ENCODE measurements at regions of chr2 and their contacts with region 1.

Region 1: GRCh38 chr2:68031542-68032160 is 31.2 kb downstream of the C1D start:
- DNase-seq: peak; percentile 70
- ATAC-seq: peak; percentile 89
- H3K4me3 ChIP-seq: no peak overlapping the region
- H3K27ac ChIP-seq: no peak overlapping the region
- H3K4me1 ChIP-seq: no peaks in the 10 kb centered on the region; the same call in 1 of the 2 replicates
- H3K27me3 ChIP-seq: no peaks in the 10 kb centered on the region
- CTCF ChIP-seq: peak; percentile 79
- POLR2A ChIP-seq: no peak
- RAD21 ChIP-seq: peak; percentile 89

Region 2: GRCh38 chr2:66429071-66429477 is 1602.6 kb before region 1 on chr2:
- CTCF ChIA-PET with region 1: no interaction called
- POLR2A ChIA-PET with region 1: no interaction called
- dilution Hi-C with region 1: no loop called
- in situ Hi-C with region 1: loop called (anchors 25 kb)
- intact Hi-C with region 1: loop called (anchors 5 kb)
- DNase-seq: peak; percentile 79
- ATAC-seq: peak; percentile 19; the same call in 1 of the 2 replicates
- H3K4me3 ChIP-seq: no peak overlapping the region
- H3K27ac ChIP-seq: no peak overlapping the region
- H3K4me1 ChIP-seq: peaks cover 5% of the 10 kb centered on the region; the same call in 1 of the 2 replicates
- H3K27me3 ChIP-seq: peaks cover 6% of the 10 kb centered on the region; the same call in 1 of the 2 replicates
- CTCF ChIP-seq: peak; percentile 86
- POLR2A ChIP-seq: 0 out of 2 replicates have a peak, but pooled peaks have one; percentile 24
- RAD21 ChIP-seq: peak; percentile 88

Region 3: GRCh38 chr2:67234439-67234838 is 797.2 kb before region 1 on chr2:
- CTCF ChIA-PET with region 1: no interaction called
- POLR2A ChIA-PET with region 1: no interaction called
- dilution Hi-C with region 1: no loop called
- in situ Hi-C with region 1: loop called (anchors 10 kb)
- intact Hi-C with region 1: no loop called
- DNase-seq: peak; percentile 72
- ATAC-seq: peak; percentile 94
- H3K4me3 ChIP-seq: no peak overlapping the region
- H3K27ac ChIP-seq: no peak overlapping the region
- H3K4me1 ChIP-seq: peaks cover 2% of the 10 kb centered on the region; the same call in 1 of the 2 replicates
- H3K27me3 ChIP-seq: no peaks in the 10 kb centered on the region
- CTCF ChIP-seq: peak; percentile 75
- POLR2A ChIP-seq: no peak
- RAD21 ChIP-seq: peak; percentile 86

Region 4: GRCh38 chr2:67733517-67733916 is 298.1 kb before region 1 on chr2:
- CTCF ChIA-PET with region 1: no interaction called
- POLR2A ChIA-PET with region 1: no interaction called
- dilution Hi-C with region 1: no loop called
- in situ Hi-C with region 1: no loop called
- intact Hi-C with region 1: loop called (anchors 5 kb)
- DNase-seq: no peak
- ATAC-seq: peak; percentile 57
- H3K4me3 ChIP-seq: no peak overlapping the region
- H3K27ac ChIP-seq: no peak overlapping the region
- H3K4me1 ChIP-seq: no peaks in the 10 kb centered on the region
- H3K27me3 ChIP-seq: no peaks in the 10 kb centered on the region
- CTCF ChIP-seq: peak; percentile 33; the same call in 1 of the 2 replicates
- POLR2A ChIP-seq: no peak
- RAD21 ChIP-seq: peak; percentile 40

Region 5: GRCh38 chr2:67760995-67761394 is 270.7 kb before region 1 on chr2:
- CTCF ChIA-PET with region 1: no interaction called
- POLR2A ChIA-PET with region 1: no interaction called
- dilution Hi-C with region 1: no loop called
- in situ Hi-C with region 1: no loop called
- intact Hi-C with region 1: no loop called
- DNase-seq: no peak
- ATAC-seq: no peak
- H3K4me3 ChIP-seq: no peak overlapping the region
- H3K27ac ChIP-seq: no peak overlapping the region
- H3K4me1 ChIP-seq: no peaks in the 10 kb centered on the region
- H3K27me3 ChIP-seq: no peaks in the 10 kb centered on the region
- CTCF ChIP-seq: no peak
- POLR2A ChIP-seq: no peak
- RAD21 ChIP-seq: no peak

Region 6: DNA sequence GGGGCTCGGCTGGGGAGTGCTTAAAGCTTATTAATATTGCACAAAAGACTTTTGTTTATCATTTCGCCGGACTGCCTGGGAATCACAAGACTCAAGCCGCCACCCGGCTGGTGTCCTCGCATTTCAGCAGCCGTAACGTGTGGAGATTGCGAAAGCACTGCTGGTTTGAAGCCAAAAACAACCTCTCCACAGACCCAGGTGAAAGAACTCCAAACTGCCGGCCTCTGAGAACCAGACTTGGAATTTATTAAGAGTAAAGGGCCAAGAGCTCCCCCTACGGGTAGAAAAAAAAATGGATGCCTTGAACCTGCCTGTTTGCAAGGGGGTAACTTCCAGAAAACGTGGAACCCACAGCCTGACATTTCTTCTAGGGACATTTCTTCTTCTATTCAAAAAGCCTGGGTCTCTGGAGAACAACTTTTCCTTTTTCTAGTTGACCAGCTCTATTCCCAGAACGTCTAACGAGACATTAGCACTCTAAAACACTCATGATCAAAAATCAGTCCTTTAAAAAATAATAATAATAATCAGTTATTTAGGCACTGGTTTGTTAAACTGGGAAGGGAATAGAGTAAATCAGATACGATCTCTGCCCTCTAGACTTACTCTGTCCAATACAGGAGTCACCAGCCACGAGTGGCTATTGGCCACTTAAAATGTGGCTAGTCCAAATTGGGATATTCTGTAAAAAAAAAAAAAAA is 185.1 kb before region 1 on chr2:
- CTCF ChIA-PET with region 1: interaction called, 9 read pairs
- POLR2A ChIA-PET with region 1: no interaction called
- dilution Hi-C with region 1: no loop called
- in situ Hi-C with region 1: loop called (anchors 10 kb)
- intact Hi-C with region 1: loop called (anchors 1 kb)
- DNase-seq: peak; percentile 98
- ATAC-seq: peak; percentile 87
- H3K4me3 ChIP-seq: no peak overlapping the region
- H3K27ac ChIP-seq: no peak overlapping the region
- H3K4me1 ChIP-seq: peaks cover 6% of the 10 kb centered on the region
- H3K27me3 ChIP-seq: no peaks in the 10 kb centered on the region
- CTCF ChIP-seq: peak; percentile 78
- POLR2A ChIP-seq: no peak
- RAD21 ChIP-seq: peak; percentile 74